Activated T-helper 2 cell treated with anti-CD3 and anti-CD28 coated beads, Interferon-gamma antibody, Interleukin-2, Interleukin-4, amounts not matched to agents 10 μg/mL and 5 μg/mL and 100 μg/mL, durations not matched to agents 14 hours and 24 hours and 36 hours (primary cell): ENCODE measurements at regions of chr12 and their contacts with region 1.

Region 1: GRCh38 chr12:111546758-111547383 is 52.2 kb downstream of the ATXN2 start:
- DNase-seq: no peak
- H3K4me3 Mint-ChIP-seq: peak overlapping the region; percentile 37
- H3K27ac Mint-ChIP-seq: peak overlapping the region; percentile 88
- H3K4me1 Mint-ChIP-seq: peaks cover 20% of the 10 kb centered on the region
- H3K27me3 Mint-ChIP-seq: no peaks in the 10 kb centered on the region

Region 2: GRCh38 chr12:111344254-111344875 is 202.5 kb before region 1 on chr12:
- intact Hi-C with region 1: no loop called
- DNase-seq: no peak
- H3K4me3 Mint-ChIP-seq: no peak overlapping the region
- H3K27ac Mint-ChIP-seq: no peak overlapping the region
- H3K4me1 Mint-ChIP-seq: no peaks in the 10 kb centered on the region
- H3K27me3 Mint-ChIP-seq: no peaks in the 10 kb centered on the region

Region 3: DNA sequence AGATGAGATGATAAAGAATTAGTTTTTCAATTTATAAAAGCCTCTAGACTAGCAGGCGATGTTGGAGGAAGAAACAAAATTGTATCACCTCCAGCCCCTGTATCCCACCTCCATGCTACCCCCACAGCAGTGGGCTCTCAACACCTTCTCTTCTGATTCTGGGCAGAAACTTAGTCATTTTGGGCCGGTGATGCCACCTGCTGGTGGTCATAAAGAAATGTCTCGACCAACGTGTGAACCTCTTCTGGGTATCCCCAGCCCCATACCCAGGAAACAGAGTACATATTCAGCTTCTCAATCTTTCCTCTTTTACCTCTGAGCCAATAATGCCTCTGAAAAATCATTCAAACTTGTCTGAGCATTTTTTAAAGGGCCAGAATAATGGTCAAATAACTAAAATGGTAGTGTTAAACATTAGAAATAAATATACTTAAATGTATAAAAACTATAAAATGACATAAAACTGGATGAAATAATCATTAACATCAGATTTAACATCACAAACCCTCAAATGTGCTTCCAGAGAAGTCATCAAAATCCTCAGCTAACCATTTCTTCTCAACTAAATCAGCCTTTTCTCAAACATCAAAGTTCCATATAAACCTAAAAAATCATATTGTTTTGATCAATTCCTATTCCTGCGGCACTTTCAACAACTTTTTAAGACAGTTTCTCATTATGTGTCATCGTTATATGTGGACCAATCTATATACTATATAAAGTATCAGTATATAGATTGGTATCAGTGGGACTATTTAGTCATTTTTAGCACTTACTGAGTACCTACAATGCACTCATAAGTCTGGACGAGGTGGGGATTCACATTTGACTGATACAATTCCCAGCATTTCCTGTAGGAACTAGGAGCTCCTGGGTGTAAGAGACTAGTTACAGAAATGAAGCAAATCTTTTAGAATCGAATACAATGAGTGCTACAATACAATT is 17.2 kb before region 1 on chr12:
- intact Hi-C with region 1: loop called (anchors 1 kb)
- DNase-seq: peak; percentile 49
- H3K4me3 Mint-ChIP-seq: no peak overlapping the region
- H3K27ac Mint-ChIP-seq: peak overlapping the region; percentile 63
- H3K4me1 Mint-ChIP-seq: peaks cover 12% of the 10 kb centered on the region
- H3K27me3 Mint-ChIP-seq: no peaks in the 10 kb centered on the region

Region 4: GRCh38 chr12:111599459-111600204 is 52.8 kb after region 1 on chr12:
- intact Hi-C with region 1: loop called (anchors 5 kb)
- DNase-seq: peak; percentile 83
- H3K4me3 Mint-ChIP-seq: peak overlapping the region; percentile 89
- H3K27ac Mint-ChIP-seq: peak overlapping the region; percentile 89
- H3K4me1 Mint-ChIP-seq: peaks cover 19% of the 10 kb centered on the region
- H3K27me3 Mint-ChIP-seq: peaks cover under 1% of the 10 kb centered on the region